GM12878 (cell line): ENCODE measurements at regions of chr9 and their contacts with region 1.

Region 1: DNA sequence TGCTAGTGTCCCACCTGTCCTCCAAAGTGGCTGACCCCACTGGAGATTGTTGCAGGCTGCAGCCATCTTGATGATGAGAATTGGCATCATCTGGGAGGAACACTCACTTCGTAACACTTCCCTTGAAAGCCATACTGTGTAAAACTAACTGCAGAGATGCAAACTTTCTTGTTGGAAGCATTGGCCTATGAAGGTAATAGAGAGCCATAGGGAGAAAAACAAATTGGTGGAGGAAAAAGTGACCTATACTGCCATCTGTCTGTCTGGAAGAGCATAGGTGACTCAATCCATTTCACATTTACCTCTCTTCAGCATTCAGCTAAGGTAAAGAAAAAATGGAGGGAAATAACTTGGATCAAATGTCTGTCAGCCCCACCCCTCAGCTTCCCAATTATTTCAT is 473.4 kb downstream of the NTRK2 start:
- DNase-seq: peak; percentile 16
- ATAC-seq: peak; percentile 84
- H3K4me3 ChIP-seq: no peak overlapping the region
- H3K27ac ChIP-seq: no peak overlapping the region
- H3K4me1 ChIP-seq: no peaks in the 10 kb centered on the region
- H3K27me3 ChIP-seq: peaks cover 0 to 3% of the 10 kb centered on the region in 2 experiments; a peak in 1 of 4 replicates
- CTCF ChIP-seq: peak; percentile 63 to 81 (median 76)
- EP300 ChIP-seq: no peak
- POLR2A ChIP-seq: no peak
- RAD21 ChIP-seq: peak; percentile 87

Region 2: DNA sequence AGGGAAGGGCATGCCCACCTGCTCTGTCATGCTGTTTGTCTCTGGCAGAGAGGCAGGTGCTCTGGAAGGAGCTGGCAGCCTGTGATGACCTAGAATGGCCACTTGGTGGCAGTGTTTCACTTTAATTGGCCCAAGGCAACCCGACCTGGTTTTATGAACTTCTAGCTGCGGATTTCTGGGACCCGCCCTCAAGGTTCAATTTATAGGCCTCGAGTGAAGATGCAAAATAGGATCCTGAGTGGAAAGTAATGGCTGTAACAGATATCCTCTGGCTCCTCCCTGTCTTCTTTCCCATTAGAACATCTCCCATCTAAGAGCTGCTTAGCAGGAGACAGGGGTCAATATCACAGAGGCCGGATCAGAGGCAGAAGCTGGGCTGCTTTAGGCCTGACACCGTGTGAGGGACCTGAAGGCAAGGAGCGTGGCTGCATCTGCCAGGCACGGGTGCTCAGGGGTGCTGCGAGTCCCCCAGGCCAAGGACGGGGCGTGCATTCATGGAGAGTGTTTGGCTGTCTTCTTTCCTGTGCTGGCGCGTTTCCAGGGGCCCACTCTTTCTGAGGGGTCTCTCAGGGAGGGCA is 745.7 kb before region 1 on chr9:
- CTCF ChIA-PET with region 1: interaction called, 41 read pairs
- POLR2A ChIA-PET with region 1: no interaction called
- RAD21 ChIA-PET with region 1: interaction called, 14 read pairs
- SMC1A ChIA-PET with region 1: interaction called, 8 read pairs
- in situ Hi-C with region 1: no loop called
- intact Hi-C with region 1: loop called (anchors 1 kb)
- DNase-seq: peak; percentile 8
- ATAC-seq: peak; percentile 96
- H3K4me3 ChIP-seq: no peak overlapping the region
- H3K27ac ChIP-seq: no peak overlapping the region
- H3K4me1 ChIP-seq: no peaks in the 10 kb centered on the region
- H3K27me3 ChIP-seq: peaks cover 0 to 2% of the 10 kb centered on the region in 2 experiments; a peak in 1 of 4 replicates
- CTCF ChIP-seq: peak; percentile 77 to 91 (median 80)
- EP300 ChIP-seq: no peak
- POLR2A ChIP-seq: no peak
- RAD21 ChIP-seq: peak; percentile 87

Region 3: DNA sequence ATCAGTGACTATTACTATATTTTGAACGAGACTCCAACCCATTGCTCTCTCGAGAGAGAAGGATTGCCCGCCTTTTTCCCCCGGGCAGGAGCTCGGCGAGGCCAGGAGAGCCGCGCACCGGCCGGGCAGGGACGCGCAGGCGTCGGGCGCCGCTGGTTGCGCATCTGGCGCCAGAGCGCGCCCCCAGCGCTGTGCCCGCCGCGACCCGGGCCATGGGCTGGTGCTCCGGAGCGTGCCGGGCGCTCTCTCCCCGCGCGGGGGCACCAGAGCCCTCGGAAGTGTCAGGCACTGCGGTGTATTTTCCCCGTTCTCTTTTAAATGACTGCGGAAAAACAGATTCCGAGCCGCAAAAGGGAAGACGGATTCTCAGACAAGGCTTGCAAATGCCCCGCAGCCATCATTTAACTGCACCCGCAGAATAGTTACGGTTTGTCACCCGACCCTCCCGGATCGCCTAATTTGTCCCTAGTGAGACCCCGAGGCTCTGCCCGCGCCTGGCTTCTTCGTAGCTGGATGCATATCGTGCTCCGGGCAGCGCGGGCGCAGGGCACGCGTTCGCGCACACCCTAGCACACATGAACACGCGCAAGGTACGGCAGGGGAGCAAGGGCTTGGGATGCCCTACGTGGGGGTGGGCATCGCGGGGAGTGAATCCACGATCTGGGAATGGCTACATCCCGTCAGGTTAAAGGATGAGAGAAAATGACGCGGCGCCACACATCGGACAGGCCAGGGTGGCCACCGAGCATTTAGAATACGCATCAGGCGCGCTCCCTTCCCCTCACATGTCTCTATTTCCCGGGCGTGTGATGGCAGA is 474.6 kb before region 1 on chr9:
- CTCF ChIA-PET with region 1: interaction called, 4 read pairs
- POLR2A ChIA-PET with region 1: no interaction called
- RAD21 ChIA-PET with region 1: no interaction called
- SMC1A ChIA-PET with region 1: no interaction called
- in situ Hi-C with region 1: no loop called
- intact Hi-C with region 1: loop called (anchors 5 kb)
- DNase-seq: no peak
- ATAC-seq: peak; percentile 95
- H3K4me3 ChIP-seq: peak overlapping the region; percentile 56
- H3K27ac ChIP-seq: no peak overlapping the region
- H3K4me1 ChIP-seq: peaks cover 4% of the 10 kb centered on the region; the same call in 1 of the 2 replicates
- H3K27me3 ChIP-seq: peaks cover 5 to 11% of the 10 kb centered on the region in 2 experiments; a peak in 3 of 4 replicates
- CTCF ChIP-seq: peak; percentile 59 to 65 (median 61); a peak in 5 of 6 replicates
- EP300 ChIP-seq: no peak
- POLR2A ChIP-seq: no peak
- RAD21 ChIP-seq: peak; percentile 45

Region 4: DNA sequence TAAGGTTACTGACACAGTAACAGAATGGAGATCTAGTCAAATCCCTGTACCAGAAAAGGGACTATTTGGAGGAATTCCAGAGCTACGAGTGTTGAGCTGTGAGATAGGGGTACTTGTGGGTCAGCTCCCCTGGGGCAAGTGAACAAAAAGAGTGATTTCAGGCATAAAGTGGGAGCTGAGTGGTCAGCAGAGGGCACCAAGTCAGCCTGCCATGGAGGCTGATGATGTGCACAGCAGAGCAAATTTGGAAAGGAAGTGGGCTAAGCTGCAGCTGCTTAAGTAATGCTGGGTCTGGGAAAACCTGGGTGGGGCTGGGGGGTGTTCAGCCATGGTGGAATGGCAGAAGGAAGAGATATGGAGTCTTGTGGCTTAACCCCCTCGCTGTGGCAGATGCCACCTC is 145.5 kb before region 1 on chr9:
- CTCF ChIA-PET with region 1: interaction called, 38 read pairs
- POLR2A ChIA-PET with region 1: no interaction called
- RAD21 ChIA-PET with region 1: interaction called, 18 read pairs
- SMC1A ChIA-PET with region 1: interaction called, 33 read pairs
- in situ Hi-C with region 1: no loop called
- intact Hi-C with region 1: no loop called
- DNase-seq: no peak
- ATAC-seq: peak; percentile 49; the same call in 2 of the 3 replicates
- H3K4me3 ChIP-seq: no peak overlapping the region
- H3K27ac ChIP-seq: no peak overlapping the region
- H3K4me1 ChIP-seq: no peaks in the 10 kb centered on the region
- H3K27me3 ChIP-seq: no peaks in the 10 kb centered on the region; a peak in 1 of 4 replicates
- CTCF ChIP-seq: peak in 2 of 3 experiments; percentile 5 to 27; a peak in 3 of 6 replicates
- EP300 ChIP-seq: no peak
- POLR2A ChIP-seq: no peak
- RAD21 ChIP-seq: peak; percentile 41

Region 5: GRCh38 chr9:85155352-85155751 is 12.4 kb after region 1 on chr9:
- CTCF ChIA-PET with region 1: interaction called, 4 read pairs
- POLR2A ChIA-PET with region 1: no interaction called
- RAD21 ChIA-PET with region 1: no interaction called
- SMC1A ChIA-PET with region 1: interaction called, 10 read pairs
- in situ Hi-C with region 1: no loop called
- intact Hi-C with region 1: no loop called
- DNase-seq: no peak
- ATAC-seq: no peak
- H3K4me3 ChIP-seq: no peak overlapping the region
- H3K27ac ChIP-seq: no peak overlapping the region
- H3K4me1 ChIP-seq: no peaks in the 10 kb centered on the region
- H3K27me3 ChIP-seq: no peaks in the 10 kb centered on the region; a peak in 1 of 4 replicates
- CTCF ChIP-seq: no peak
- EP300 ChIP-seq: no peak
- POLR2A ChIP-seq: no peak
- RAD21 ChIP-seq: no peak